ENCODE measurements at regions of chrX and their contacts with region 1.

Region 1: GRCh38 chrX:57119416-57119815 is 1.9 kb downstream of the SPIN2B start:
- DNase-seq: no peak
- ATAC-seq: no peak

Region 2: GRCh38 chrX:57266871-57267707 is 147.7 kb after region 1 on chrX:
- intact Hi-C with region 1: no loop called
- DNase-seq: no peak
- ATAC-seq: no peak

Region 3: GRCh38 chrX:57282568-57282967 is 163.2 kb after region 1 on chrX:
- intact Hi-C with region 1: no loop called
- DNase-seq: no peak
- ATAC-seq: no peak

Region 4: GRCh38 chrX:57573754-57574153 is 454.3 kb after region 1 on chrX:
- intact Hi-C with region 1: loop called (anchors 10 kb)
- DNase-seq: no peak
- ATAC-seq: no peak

Region 5: DNA sequence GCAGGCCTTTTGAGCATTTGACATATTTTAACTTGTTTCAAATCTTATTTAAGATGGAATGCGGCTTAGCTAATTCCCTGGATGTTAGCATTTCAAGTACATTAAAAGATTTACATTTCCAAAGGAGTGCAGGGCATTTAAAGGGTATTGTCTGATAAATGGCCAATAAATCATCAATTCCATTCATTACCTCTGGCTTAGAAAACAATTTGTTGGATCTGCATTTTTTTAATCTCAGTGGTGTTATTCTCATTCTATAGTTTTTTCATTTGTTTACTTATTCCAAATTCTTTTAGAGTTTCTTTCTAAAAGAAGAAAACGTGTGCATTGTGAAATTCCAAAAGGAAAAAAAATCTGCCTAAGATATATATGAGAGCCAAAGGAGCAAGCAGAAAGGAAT is 561.9 kb after region 1 on chrX:
- intact Hi-C with region 1: no loop called
- DNase-seq: no peak
- ATAC-seq: no peak

Measured in left ventricle myocardium superior (tissue), 1 donor.